PC-3 (cell line): ENCODE measurements at regions of chr2 and their contacts with region 1.

Region 1: GRCh38 chr2:37389989-37390765 is 45.7 kb downstream of the QPCT start:
- DNase-seq: peak; percentile 95
- ATAC-seq: peak; percentile 96
- H3K4me3 ChIP-seq: peak overlapping the region; percentile 8; the same call in 1 of the 2 replicates
- H3K27ac ChIP-seq: peak overlapping the region; percentile 76
- H3K4me1 ChIP-seq: peaks cover 44% of the 10 kb centered on the region
- H3K27me3 ChIP-seq: no peaks in the 10 kb centered on the region
- CTCF ChIP-seq: no peak

Region 2: GRCh38 chr2:37287966-37288365 is 102.2 kb before region 1 on chr2:
- CTCF ChIA-PET with region 1: no interaction called
- POLR2A ChIA-PET with region 1: interaction called, 3 read pairs
- intact Hi-C with region 1: loop called (anchors 2 kb)
- DNase-seq: peak; percentile 27
- ATAC-seq: peak; percentile 79
- H3K4me3 ChIP-seq: no peak overlapping the region
- H3K27ac ChIP-seq: no peak overlapping the region
- H3K4me1 ChIP-seq: 0 out of 2 replicates have a peak, but pooled peaks cover 6% of the 10 kb centered on the region
- H3K27me3 ChIP-seq: no peaks in the 10 kb centered on the region
- CTCF ChIP-seq: peak; percentile 59

Region 3: DNA sequence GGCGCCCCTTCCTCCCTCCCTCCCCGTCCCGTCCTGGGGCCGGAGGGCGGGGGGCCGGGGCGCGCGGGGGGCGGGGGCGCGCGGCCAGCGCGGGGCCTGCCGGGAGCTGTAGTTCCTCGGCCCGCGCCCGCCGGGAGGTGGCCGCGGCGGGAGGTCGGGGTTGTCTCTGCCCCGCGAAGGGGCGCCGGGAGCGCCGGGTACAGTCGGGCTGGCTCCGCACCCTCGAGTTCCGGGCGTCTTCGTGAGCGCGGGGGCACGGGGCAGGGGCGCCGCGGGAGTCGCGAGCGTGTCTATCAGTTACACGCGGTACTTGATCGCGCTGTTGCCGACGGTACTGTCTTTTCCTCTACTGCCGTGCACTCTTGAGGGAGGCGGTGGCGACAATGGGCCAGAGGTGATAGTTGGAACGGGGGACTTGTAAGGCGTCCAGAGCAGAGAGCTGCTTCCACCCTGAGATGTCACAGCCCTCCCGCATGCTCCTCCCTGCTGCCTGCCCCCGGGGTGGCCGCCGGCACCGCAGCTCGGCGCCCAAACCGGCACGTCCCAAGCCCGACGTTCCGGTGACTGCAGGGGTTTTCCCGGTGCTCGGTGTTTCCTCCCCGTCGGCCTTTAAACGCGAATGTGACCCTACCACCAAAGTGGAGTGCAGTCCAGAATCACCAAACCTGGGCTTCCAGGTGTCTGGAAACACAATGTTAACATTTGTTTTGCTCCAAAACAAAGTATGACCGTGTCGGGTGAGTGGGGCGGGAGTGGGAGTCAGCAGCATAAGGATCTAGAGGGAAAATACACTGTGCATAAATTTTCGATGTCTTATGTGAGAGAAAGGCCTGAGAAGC is 65.2 kb before region 1 on chr2 and contains the start of gene PRKD3:
- CTCF ChIA-PET with region 1: no interaction called
- POLR2A ChIA-PET with region 1: no interaction called
- intact Hi-C with region 1: loop called (anchors 5 kb)
- DNase-seq: peak; percentile 69
- ATAC-seq: peak; percentile 70
- H3K4me3 ChIP-seq: peak within 1 kb of the TSS; percentile 93
- H3K27ac ChIP-seq: peak within 1 kb of the TSS; percentile 44
- H3K4me1 ChIP-seq: peaks cover 26% of the 10 kb centered on the region
- H3K27me3 ChIP-seq: no peaks in the 10 kb centered on the region
- CTCF ChIP-seq: no peak
- total RNA-seq, gene PRKD3: 26.4 and 27.2 TPM in 2 replicates

Region 4: DNA sequence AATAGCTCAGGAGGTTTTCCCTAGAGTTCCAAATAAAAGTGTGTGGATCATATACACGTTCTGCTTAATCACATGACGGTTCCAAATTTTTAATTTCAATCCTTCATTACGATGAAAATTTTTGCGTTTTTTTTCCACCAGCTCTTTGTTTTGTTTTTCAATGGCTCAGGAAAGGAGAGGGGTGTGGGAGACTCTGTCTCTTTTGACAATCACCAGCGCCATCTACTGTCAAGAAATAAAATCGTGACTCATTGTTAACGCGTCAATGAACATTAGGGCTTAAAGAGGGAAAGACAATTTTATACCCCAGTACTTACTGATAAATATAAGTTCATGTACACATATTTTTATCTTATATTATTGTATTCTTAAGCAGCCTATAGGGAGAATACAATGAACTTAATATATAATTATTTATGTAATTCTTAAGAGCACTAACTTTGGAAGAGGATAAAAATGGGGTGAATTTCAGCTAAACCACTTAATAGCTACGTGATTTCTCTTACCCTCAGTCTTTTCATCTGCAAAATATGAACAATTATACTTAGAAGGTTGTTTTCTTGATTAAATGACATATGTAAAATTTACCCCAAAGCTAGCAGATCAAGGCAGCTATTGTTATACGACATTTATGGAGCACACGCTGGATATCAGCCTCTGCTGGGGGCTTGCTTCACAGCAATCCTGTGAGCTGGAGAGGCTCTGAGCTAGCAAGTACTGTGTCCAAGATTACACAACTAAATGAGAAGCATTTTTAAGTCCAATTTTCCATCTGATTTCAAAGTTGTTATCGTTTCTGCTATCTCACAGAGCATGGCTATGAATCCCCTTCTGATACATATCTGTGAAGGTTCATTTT is 487.5 kb after region 1 on chr2:
- CTCF ChIA-PET with region 1: interaction called, 38 read pairs
- POLR2A ChIA-PET with region 1: no interaction called
- intact Hi-C with region 1: no loop called
- DNase-seq: peak; percentile 86
- ATAC-seq: peak; percentile 76
- H3K4me3 ChIP-seq: 0 out of 2 replicates have a peak overlapping the region, but pooled peaks have one; percentile 24
- H3K27ac ChIP-seq: no peak overlapping the region
- H3K4me1 ChIP-seq: no peaks in the 10 kb centered on the region
- H3K27me3 ChIP-seq: no peaks in the 10 kb centered on the region
- CTCF ChIP-seq: peak; percentile 86

Region 5: GRCh38 chr2:37890893-37891495 is 500.8 kb after region 1 on chr2:
- CTCF ChIA-PET with region 1: no interaction called
- POLR2A ChIA-PET with region 1: no interaction called
- intact Hi-C with region 1: loop called (anchors 5 kb)
- DNase-seq: peak; percentile 89
- ATAC-seq: peak; percentile 97
- H3K4me3 ChIP-seq: no peak overlapping the region
- H3K27ac ChIP-seq: no peak overlapping the region
- H3K4me1 ChIP-seq: no peaks in the 10 kb centered on the region
- H3K27me3 ChIP-seq: no peaks in the 10 kb centered on the region
- CTCF ChIP-seq: peak; percentile 87